Stomach (tissue), 19 donors: ENCODE measurements at regions of chr10 and their contacts with region 1.

Region 1: GRCh38 chr10:92880233-92880861 is 32.0 kb downstream of the EXOC6 start:
- DNase-seq: peak in 1 of 2 donors; percentile 79
- H3K4me3 ChIP-seq: no peak overlapping the region
- H3K27ac ChIP-seq: no peak overlapping the region
- H3K4me1 ChIP-seq: peaks cover 0 to 13% (median 0%) of the 10 kb centered on the region in 4 donors
- H3K27me3 ChIP-seq: no peaks in the 10 kb centered on the region
- CTCF ChIP-seq: peak in 4 of 7 experiments; percentile 9 to 36 (median 26)
- EP300 ChIP-seq: no peak
- POLR2A ChIP-seq: no peak

Region 2: DNA sequence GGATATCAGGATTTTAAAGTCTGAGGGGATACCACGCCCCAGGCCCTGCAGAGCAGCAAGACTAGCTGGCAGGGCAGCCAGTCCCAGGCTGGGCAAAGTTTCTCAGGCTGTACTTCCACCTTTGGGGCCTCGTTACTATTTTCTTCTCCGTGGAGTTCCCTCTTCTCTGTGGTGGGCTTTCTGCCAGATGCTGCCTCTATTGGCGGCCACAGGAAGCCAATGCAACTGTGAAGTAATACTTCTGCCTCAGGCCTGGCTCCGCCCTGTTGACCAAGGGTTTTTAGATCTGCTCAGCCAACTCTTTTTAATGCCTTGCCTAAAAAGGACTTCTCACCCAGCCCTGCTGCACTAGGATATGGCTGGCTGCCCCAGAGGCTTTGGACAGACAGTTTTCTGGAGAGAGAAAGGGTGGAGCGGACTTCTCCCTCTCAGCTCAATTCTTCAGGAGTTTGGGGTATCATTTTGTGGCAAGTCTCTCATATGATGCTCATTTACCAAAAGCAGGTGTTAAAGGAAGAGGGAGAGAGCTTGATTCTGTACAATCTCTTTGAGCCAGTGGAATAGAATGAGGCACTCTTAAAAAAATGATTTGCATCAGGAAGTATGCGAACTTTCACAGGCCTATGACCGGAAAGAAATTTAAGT is 123.2 kb before region 1 on chr10:
- intact Hi-C with region 1: no loop called
- DNase-seq: peak; percentile 70 to 87
- H3K4me3 ChIP-seq: no peak overlapping the region
- H3K27ac ChIP-seq: peak overlapping the region in 4 of 5 donors; percentile 71 to 85 (median 80)
- H3K4me1 ChIP-seq: peaks cover 9 to 64% (median 24%) of the 10 kb centered on the region in 4 donors
- H3K27me3 ChIP-seq: no peaks in the 10 kb centered on the region
- CTCF ChIP-seq: no peak
- EP300 ChIP-seq: no peak
- POLR2A ChIP-seq: no peak

Region 3: GRCh38 chr10:92839191-92840085 is 40.9 kb before region 1 on chr10:
- intact Hi-C with region 1: loop called (anchors 10 kb)
- DNase-seq: peak; percentile 58 to 61
- H3K4me3 ChIP-seq: no peak overlapping the region
- H3K27ac ChIP-seq: peak overlapping the region in 1 of 5 donors; percentile 26
- H3K4me1 ChIP-seq: peaks cover 0 to 20% (median 0%) of the 10 kb centered on the region in 4 donors
- H3K27me3 ChIP-seq: no peaks in the 10 kb centered on the region
- CTCF ChIP-seq: peak in 1 of 7 experiments; percentile 18
- EP300 ChIP-seq: no peak
- POLR2A ChIP-seq: no peak

Region 4: GRCh38 chr10:93873427-93874115 is 993.2 kb after region 1 on chr10:
- intact Hi-C with region 1: no loop called
- DNase-seq: peak in 1 of 2 donors; percentile 35
- H3K4me3 ChIP-seq: no peak overlapping the region
- H3K27ac ChIP-seq: no peak overlapping the region
- H3K4me1 ChIP-seq: peaks cover 0 to 9% (median 3%) of the 10 kb centered on the region in 4 donors
- H3K27me3 ChIP-seq: no peaks in the 10 kb centered on the region
- CTCF ChIP-seq: no peak
- EP300 ChIP-seq: no peak
- POLR2A ChIP-seq: no peak